Activated CD4-positive, alpha-beta T cell treated with anti-CD3 and anti-CD28 coated beads for 36 hours (primary cell): ENCODE measurements at regions of chr6 and their contacts with region 1.

Region 1: DNA sequence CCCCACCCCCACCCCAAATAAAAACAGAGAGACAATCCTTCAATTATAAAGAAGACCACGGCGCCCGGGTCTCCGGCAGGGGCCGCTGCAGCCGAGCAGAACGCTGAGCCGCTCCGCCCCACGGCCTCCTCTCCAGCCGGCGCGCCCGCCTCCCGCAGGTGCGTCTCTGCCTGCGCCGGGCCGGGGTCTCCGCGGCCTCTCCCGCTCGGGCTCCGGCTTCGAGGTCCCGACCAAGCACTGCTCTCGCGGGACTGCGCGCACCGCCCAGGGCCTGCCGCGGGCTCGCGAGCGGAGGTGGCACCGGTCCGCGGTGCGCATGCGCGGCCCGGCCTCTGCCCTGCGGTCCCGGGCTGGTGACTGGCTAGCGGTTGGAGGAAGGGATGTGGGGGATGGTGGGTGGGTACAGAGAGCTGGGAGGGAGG is 241 bp upstream of the SIRT5 start:
- DNase-seq: peak; percentile 95
- ATAC-seq: peak; percentile 80
- H3K4me3 Mint-ChIP-seq: peak overlapping the region; percentile 94
- H3K27ac Mint-ChIP-seq: peak overlapping the region; percentile 100
- H3K4me1 Mint-ChIP-seq: peaks cover 22% of the 10 kb centered on the region
- H3K27me3 Mint-ChIP-seq: no peaks in the 10 kb centered on the region

Region 2: DNA sequence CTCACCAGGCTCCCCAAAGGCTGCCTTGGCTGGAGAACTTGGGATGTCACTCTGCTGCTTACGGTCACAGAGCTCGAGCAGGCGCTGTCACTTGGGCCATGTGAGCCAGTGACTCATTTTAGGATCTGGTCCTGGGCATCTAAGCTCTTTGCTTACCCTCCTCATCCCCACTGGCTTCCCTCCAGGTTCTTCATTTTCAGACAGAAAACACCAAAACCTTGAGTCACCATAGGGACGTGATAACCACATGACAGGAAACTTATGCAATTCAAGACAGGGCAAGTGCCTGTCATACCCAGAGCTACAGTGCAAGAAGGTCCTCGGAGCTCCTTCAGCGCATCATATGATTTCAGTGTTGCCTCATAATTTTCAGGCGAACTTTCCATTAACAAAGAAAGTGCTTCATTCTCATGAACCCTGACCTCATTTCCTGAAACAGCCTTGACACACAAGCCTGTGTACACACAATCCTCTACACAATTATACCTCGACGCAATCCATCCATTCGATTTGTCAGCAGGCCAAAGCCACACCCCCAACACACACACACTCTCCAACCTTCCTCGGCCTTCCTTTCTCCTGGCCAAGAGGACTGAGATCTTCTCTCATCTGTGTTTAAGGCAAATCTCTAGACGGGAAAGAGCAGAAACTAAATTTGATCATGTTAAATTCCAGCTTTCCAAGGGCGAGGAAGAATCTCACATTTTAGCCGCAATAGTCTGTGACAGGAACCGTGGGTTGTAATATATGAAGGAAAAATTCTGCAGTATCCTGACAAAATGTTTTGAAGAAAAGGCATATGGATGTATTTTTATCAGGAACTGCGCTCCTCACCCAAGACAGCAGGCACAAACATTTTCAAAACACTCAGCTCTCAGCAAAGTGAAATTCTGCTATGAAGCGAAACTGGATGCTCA is 271.2 kb before region 1 on chr6:
- CTCF ChIA-PET with region 1: interaction called, 3 read pairs
- POLR2A ChIA-PET with region 1: interaction called, 9 read pairs
- intact Hi-C with region 1: loop called in 1 of 2 experiments (anchors 1 kb)
- DNase-seq: peak; percentile 79
- ATAC-seq: peak; percentile 95
- H3K4me3 Mint-ChIP-seq: no peak overlapping the region
- H3K27ac Mint-ChIP-seq: peak overlapping the region; percentile 94
- H3K4me1 Mint-ChIP-seq: peaks cover 41% of the 10 kb centered on the region
- H3K27me3 Mint-ChIP-seq: no peaks in the 10 kb centered on the region

Region 3: DNA sequence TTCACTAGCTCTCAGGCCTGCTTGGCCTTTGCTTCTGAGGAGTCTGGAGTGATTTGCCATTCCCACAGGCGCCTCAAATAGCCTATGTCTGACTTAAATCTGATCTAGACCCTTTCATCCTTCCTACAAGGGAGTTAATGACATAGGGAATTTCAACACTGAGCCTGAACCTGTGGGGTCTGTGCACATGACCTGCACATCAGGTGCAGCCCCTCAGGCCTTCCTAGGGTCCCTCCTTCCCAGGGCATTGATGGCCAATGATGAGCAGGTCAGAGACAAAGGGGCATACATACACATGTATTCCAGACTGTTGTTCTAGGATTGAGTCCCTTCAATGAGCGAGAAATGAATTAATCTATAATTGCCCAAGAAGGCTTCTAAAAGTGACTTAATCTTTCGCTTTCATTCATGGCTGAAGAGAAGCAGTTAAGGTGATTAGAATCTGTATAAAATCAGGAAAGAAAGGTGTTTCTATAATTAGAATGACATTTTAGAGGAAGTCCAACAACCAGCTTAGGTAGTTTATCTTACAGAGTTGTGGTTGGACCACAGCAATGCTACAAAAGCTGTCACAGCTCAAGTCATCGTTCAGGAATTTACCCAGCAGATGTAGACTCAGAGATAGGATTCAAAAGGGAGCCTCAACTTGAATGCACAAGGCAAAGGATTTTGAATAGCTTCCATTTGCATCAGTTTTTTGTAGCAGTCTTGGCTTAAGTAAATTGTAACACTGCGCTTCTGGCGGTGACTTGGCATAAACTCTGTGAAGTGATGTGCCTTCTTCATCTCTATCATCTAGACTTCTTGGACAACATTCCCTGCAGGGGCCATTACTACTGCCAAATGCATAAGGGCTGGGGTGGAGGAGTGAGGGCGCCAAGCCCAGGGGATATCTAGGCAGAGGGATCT is 218.9 kb before region 1 on chr6:
- CTCF ChIA-PET with region 1: interaction called, 11 read pairs
- POLR2A ChIA-PET with region 1: interaction called, 5 read pairs
- intact Hi-C with region 1: loop called in 1 of 2 experiments (anchors 1 kb)
- DNase-seq: peak; percentile 53
- ATAC-seq: peak; percentile 73
- H3K4me3 Mint-ChIP-seq: peak overlapping the region; percentile 68
- H3K27ac Mint-ChIP-seq: peak overlapping the region; percentile 99
- H3K4me1 Mint-ChIP-seq: peaks cover 48% of the 10 kb centered on the region
- H3K27me3 Mint-ChIP-seq: no peaks in the 10 kb centered on the region

Region 4: DNA sequence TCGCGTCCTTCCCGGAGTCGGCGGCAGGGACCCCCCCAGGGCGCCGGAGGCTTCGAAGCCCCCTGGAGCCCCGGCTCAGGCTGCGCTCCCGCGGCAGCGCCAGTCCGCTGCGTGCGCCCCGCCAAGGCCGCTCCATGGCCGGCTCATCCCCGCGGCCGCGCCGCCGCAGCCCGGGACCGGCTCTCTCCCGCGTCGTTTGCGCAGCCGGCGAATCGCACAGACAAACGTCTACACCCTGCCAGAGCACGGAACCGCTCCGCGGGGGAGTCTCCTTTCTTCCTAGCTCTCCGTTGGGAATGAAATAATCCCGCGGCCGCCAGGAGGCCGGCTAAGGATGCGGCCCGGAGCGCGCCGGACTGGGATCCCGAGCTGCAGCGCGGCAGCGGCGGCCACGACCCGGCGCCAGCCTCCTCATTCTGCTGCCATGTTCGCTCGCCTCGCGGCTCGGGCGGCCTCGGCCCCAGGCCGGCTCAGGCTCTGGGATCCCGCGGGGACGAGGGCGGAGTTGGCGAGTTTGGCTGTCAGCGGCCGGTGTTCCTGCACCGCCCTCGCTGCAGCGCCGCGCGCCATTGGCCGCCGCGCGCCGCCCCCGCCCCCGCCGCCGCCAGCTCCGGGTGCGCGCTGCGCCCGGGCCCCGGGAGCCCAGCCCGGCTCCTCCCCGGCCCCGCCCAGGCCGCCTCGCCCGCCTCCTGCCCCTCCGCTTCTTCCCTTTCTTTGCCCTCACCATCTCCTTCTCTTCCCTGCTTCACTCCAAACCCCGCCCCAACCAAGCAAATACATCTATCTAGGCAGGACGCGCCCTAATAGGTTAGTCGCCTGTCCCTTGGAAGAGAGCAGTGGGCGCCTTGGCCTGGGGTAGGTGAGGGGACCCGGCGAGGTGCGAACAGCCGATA is 86.8 kb before region 1 on chr6 and contains the start of gene GFOD1:
- CTCF ChIA-PET with region 1: interaction called, 3 read pairs
- POLR2A ChIA-PET with region 1: interaction called, 4 read pairs
- intact Hi-C with region 1: loop called (anchors 1 to 2 kb)
- DNase-seq: peak; percentile 87
- ATAC-seq: peak; percentile 83
- H3K4me3 Mint-ChIP-seq: peak within 1 kb of the TSS; percentile 83
- H3K27ac Mint-ChIP-seq: peak within 1 kb of the TSS; percentile 74
- H3K4me1 Mint-ChIP-seq: peaks cover 36% of the 10 kb centered on the region
- H3K27me3 Mint-ChIP-seq: peaks cover 8% of the 10 kb centered on the region
- total RNA-seq, gene GFOD1: 4.2 to 5.8 TPM

Region 5: GRCh38 chr6:13767121-13767808 is 193.1 kb after region 1 on chr6:
- CTCF ChIA-PET with region 1: interaction called, 4 read pairs
- POLR2A ChIA-PET with region 1: no interaction called
- intact Hi-C with region 1: loop called in 1 of 2 experiments (anchors 1 kb)
- DNase-seq: peak; percentile 47
- ATAC-seq: no peak
- H3K4me3 Mint-ChIP-seq: peak overlapping the region; percentile 63
- H3K27ac Mint-ChIP-seq: peak overlapping the region; percentile 65
- H3K4me1 Mint-ChIP-seq: peaks cover 40% of the 10 kb centered on the region
- H3K27me3 Mint-ChIP-seq: no peaks in the 10 kb centered on the region

Region 6: DNA sequence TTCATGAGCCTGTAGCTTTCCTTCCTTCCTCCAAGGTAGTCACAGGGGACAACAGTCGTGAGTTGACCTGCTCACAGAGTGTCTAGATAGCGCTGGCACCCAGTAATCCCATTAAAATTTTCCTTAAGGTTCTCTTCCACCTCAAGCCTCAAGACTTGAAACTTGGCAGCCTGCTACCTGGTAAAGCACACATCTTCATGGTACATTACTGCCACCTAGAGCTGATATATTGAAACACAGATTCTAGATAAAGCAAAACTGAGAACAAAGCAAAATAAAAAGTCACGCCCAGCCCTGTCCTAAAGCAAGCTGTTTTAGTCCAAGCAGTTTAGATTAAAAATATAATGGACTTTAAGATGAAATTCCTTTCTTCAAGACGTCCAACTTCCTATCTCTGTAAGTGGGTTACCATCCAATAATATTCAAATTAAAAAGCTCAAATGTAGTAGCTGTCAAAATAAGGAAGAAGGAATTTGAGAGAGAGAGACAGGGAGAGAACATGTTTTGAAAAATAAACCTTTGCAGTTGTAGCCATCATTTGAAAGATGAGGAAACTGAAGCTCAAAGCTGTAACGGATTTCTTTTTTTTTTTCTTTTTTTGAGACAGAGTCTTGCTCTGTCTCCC is 492.7 kb after region 1 on chr6:
- CTCF ChIA-PET with region 1: interaction called, 4 read pairs
- POLR2A ChIA-PET with region 1: no interaction called
- intact Hi-C with region 1: loop called in 1 of 2 experiments (anchors 5 kb)
- DNase-seq: peak; percentile 27
- ATAC-seq: peak; percentile 88
- H3K4me3 Mint-ChIP-seq: no peak overlapping the region
- H3K27ac Mint-ChIP-seq: no peak overlapping the region
- H3K4me1 Mint-ChIP-seq: peaks cover 4% of the 10 kb centered on the region
- H3K27me3 Mint-ChIP-seq: peaks cover 10% of the 10 kb centered on the region